A673 (cell line): ENCODE measurements at regions of chr5 and their contacts with region 1.

Region 1: GRCh38 chr5:107571621-107572536 is 98.9 kb downstream of the EFNA5 start:
- DNase-seq: peak; percentile 95
- H3K4me3 ChIP-seq: peak overlapping the region; percentile 21
- H3K27ac ChIP-seq: no peak overlapping the region
- H3K4me1 ChIP-seq: peaks cover 43% of the 10 kb centered on the region
- H3K27me3 ChIP-seq: peaks cover 19% of the 10 kb centered on the region
- CTCF ChIP-seq: peak; percentile 96

Region 2: DNA sequence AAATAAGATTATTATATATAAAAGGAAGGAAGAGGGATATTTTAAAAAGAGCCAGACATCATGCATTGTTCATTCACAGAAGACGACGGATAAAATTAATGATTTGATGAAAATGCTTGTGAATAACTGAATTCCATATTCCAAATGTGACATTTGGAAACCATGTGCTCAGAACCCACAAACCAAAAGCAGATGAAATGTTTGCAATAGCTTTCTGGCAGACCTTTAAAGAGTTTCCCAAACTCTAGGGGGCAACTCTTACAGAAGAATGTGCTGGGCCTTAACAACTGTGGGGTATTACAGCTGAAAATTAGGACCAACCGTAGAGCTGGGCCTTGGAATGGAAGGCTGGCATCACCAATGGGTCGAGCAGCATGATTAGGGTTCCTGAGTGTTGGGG is 372.1 kb before region 1 on chr5:
- CTCF ChIA-PET with region 1: no interaction called
- POLR2A ChIA-PET with region 1: no interaction called
- intact Hi-C with region 1: loop called (anchors 10 kb)
- DNase-seq: no peak
- H3K4me3 ChIP-seq: no peak overlapping the region
- H3K27ac ChIP-seq: no peak overlapping the region
- H3K4me1 ChIP-seq: peaks cover 32% of the 10 kb centered on the region
- H3K27me3 ChIP-seq: no peaks in the 10 kb centered on the region
- CTCF ChIP-seq: no peak

Region 3: GRCh38 chr5:107248066-107248695 is 323.7 kb before region 1 on chr5:
- CTCF ChIA-PET with region 1: no interaction called
- POLR2A ChIA-PET with region 1: no interaction called
- intact Hi-C with region 1: loop called (anchors 10 kb)
- DNase-seq: peak; percentile 80
- H3K4me3 ChIP-seq: no peak overlapping the region
- H3K27ac ChIP-seq: no peak overlapping the region
- H3K4me1 ChIP-seq: peaks cover 4% of the 10 kb centered on the region
- H3K27me3 ChIP-seq: no peaks in the 10 kb centered on the region
- CTCF ChIP-seq: peak; percentile 95

Region 4: DNA sequence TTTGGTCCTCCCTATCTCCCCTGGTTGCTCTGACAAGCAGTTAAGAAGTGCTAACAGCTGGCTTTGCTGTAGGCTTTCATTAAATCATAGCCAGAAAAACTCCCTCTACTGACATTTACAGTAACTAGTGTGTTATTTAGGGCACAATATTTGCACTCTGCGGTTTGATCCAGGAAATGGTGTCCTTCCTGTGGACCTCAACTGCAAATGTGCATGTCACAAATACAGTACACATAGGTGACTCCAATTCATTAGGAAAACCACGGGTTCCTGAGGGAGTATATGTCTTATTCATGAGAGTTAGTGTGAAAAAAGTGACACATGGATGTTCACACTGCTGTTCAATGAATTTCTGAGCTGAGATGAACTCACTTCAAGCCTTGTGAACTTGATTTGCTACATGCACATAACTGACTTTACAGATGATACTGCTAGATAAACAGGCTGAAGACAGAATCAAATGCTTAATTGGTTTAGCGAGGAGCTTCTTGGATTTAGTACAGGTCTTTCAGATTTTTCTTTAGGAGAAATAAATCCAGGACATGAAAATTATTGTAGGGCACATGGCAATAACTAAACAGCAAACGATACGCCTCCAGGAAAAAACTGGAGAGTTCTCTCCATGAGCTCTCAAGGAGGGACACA is 182.6 kb before region 1 on chr5:
- CTCF ChIA-PET with region 1: interaction called, 3 read pairs
- POLR2A ChIA-PET with region 1: no interaction called
- intact Hi-C with region 1: loop called (anchors 10 kb)
- DNase-seq: peak; percentile 88
- H3K4me3 ChIP-seq: no peak overlapping the region
- H3K27ac ChIP-seq: no peak overlapping the region
- H3K4me1 ChIP-seq: peaks cover 31% of the 10 kb centered on the region
- H3K27me3 ChIP-seq: no peaks in the 10 kb centered on the region
- CTCF ChIP-seq: no peak; the same call in 1 of the 2 replicates

Region 5: DNA sequence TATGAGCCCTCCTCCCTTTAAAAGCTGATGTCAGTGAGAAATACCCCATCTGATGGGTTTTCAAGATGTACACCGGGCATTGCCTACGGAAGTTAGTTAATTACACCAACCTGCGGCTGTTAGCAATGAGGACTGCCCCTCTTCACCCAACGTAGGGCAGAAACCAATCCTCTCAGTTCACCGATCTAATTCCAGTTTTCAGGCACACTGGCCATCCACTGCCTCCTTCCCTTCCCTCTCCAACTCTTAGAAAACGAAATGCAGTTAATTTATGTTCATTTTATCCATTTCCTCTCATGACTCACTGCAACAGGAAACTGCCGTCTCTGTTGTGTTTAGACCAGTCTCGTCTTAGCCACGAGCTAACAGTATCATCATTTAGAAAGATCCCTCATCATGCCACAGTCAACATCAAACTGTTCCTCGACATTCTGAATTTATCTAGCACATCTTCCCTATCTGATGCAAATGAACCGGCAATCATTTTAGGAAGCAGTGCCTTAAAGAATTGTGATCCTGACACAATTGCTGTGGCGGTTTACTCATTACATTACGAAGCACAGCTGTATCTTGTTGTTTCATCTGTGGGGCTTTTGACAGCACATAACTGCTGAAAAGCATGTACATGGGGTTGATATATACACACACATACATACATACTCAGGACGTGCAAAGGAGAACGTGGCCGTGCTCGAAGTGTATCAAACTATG is 69.8 kb before region 1 on chr5:
- CTCF ChIA-PET with region 1: interaction called, 3 read pairs
- POLR2A ChIA-PET with region 1: no interaction called
- intact Hi-C with region 1: loop called (anchors 5 kb)
- DNase-seq: peak; percentile 79
- H3K4me3 ChIP-seq: peak overlapping the region; percentile 30
- H3K27ac ChIP-seq: peak overlapping the region; percentile 13
- H3K4me1 ChIP-seq: peaks cover 26% of the 10 kb centered on the region
- H3K27me3 ChIP-seq: no peaks in the 10 kb centered on the region
- CTCF ChIP-seq: no peak